ENCODE measurements at regions of chr6 and their contacts with region 1.

Region 1: GRCh38 chr6:39724787-39725631 is at the start of gene KIF6:
- DNase-seq: peak; percentile 86
- H3K4me3 ChIP-seq: peak within 1 kb of the TSS; percentile 51 to 70
- H3K27ac ChIP-seq: no peak within 1 kb of the TSS
- H3K4me1 ChIP-seq: no peaks in the 10 kb centered on the region
- H3K27me3 ChIP-seq: no peaks in the 10 kb centered on the region
- CTCF ChIP-seq: peak in 1 of 4 experiments; percentile 19
- POLR2A ChIP-seq: no peak
- total RNA-seq, gene KIF6: 0.09 to 0.97 TPM

Region 2: GRCh38 chr6:39657355-39658135 is 67.5 kb before region 1 on chr6:
- intact Hi-C with region 1: no loop called
- DNase-seq: no peak
- H3K4me3 ChIP-seq: no peak overlapping the region
- H3K27ac ChIP-seq: no peak overlapping the region
- H3K4me1 ChIP-seq: no peaks in the 10 kb centered on the region
- H3K27me3 ChIP-seq: no peaks in the 10 kb centered on the region
- CTCF ChIP-seq: no peak
- POLR2A ChIP-seq: no peak

Region 3: GRCh38 chr6:39791850-39792539 is 67.0 kb after region 1 on chr6 and contains the start of gene DAAM2:
- intact Hi-C with region 1: loop called (anchors 10 kb)
- DNase-seq: no peak
- H3K4me3 ChIP-seq: peak within 1 kb of the TSS; percentile 42 to 50
- H3K27ac ChIP-seq: peak within 1 kb of the TSS; percentile 54 to 59
- H3K4me1 ChIP-seq: no peaks in the 10 kb centered on the region
- H3K27me3 ChIP-seq: no peaks in the 10 kb centered on the region
- CTCF ChIP-seq: no peak
- POLR2A ChIP-seq: no peak
- total RNA-seq, gene DAAM2: 4.7 to 41.3 TPM

Region 4: DNA sequence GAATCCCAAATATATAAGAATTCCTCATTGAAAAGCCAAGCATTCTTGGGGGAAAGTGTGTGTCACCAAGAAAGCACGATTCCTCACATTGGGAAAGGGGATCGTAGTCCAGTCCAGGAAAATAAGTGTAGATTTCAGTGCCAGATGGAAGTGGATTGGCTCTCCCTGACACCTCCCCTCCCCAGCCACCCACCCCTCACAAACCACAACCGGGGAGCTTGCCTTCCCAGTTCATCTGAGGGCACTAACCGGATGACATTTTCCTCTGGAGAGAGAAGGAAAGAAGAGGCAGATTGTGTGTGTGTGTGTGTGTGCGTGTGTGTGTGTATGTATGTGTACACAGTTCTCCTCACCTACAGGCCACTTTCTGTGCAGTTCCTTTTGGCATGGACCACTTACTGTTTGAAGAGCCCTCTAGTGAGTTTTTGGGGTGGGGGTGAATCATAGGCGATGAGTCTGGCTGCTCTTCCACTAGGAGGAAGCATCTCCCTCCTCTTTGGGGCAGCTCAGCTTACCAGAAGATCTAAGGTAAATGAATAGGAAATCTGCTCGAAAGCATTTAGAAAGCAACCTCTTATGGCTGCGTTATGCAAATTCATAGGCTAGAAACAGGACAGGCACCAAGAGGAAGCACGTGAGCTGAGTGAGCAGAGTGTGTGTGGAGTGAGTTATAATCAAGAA is 88.0 kb after region 1 on chr6:
- intact Hi-C with region 1: no loop called
- DNase-seq: no peak
- H3K4me3 ChIP-seq: no peak overlapping the region
- H3K27ac ChIP-seq: no peak overlapping the region
- H3K4me1 ChIP-seq: no peaks in the 10 kb centered on the region
- H3K27me3 ChIP-seq: no peaks in the 10 kb centered on the region
- CTCF ChIP-seq: no peak
- POLR2A ChIP-seq: no peak

Region 5: DNA sequence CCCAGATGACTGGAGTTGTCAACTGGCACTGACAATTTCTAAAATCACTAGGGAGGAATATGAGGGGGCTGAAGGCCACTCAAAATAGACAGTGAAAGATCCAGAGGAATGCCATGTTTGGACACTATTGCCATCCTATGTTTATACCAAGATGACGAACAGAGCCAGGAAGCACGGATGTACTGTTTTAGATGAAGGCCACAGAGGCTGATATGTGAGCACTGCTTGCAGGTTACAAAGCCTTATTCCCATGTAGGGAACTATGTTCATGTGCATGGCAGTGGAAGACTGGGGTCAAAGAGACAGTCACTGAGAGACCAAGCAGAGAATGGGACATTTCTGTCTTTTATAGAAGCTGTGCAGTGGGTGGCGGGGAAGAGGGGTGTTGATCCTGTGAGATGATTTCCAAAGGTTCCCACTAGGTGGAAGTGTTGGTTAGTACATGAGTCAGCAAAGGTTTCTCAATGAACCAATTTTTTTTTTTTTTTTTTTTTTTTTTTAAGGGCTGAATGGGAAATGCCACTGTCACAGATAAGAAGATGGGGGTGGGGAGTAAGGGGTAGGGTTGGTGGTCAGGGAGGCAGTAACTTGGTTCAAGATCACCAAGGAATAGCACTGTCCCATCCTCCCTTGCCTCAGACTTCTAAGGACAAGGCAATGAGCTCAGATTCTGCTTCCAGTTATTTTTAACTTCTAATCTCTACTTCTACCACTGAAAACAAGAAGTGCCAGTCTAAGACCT is 256.0 kb after region 1 on chr6:
- intact Hi-C with region 1: no loop called
- DNase-seq: peak; percentile 16
- H3K4me3 ChIP-seq: no peak overlapping the region
- H3K27ac ChIP-seq: no peak overlapping the region
- H3K4me1 ChIP-seq: no peaks in the 10 kb centered on the region
- H3K27me3 ChIP-seq: no peaks in the 10 kb centered on the region
- CTCF ChIP-seq: peak in 3 of 4 experiments; percentile 41 to 56 (median 53)
- POLR2A ChIP-seq: no peak

Measured in prostate gland (tissue), 2 donors.